Ovary (tissue), 10 donors: ENCODE measurements at regions of chrX and their contacts with region 1.

Region 1: GRCh38 chrX:140157611-140158010 is 192.3 kb upstream of the CXorf66 start:
- DNase-seq: no peak
- H3K4me3 ChIP-seq: no peak overlapping the region
- H3K27ac ChIP-seq: no peak overlapping the region
- H3K4me1 ChIP-seq: no peaks in the 10 kb centered on the region
- H3K27me3 ChIP-seq: no peaks in the 10 kb centered on the region
- CTCF ChIP-seq: no peak
- EP300 ChIP-seq: no peak
- POLR2A ChIP-seq: no peak

Region 2: DNA sequence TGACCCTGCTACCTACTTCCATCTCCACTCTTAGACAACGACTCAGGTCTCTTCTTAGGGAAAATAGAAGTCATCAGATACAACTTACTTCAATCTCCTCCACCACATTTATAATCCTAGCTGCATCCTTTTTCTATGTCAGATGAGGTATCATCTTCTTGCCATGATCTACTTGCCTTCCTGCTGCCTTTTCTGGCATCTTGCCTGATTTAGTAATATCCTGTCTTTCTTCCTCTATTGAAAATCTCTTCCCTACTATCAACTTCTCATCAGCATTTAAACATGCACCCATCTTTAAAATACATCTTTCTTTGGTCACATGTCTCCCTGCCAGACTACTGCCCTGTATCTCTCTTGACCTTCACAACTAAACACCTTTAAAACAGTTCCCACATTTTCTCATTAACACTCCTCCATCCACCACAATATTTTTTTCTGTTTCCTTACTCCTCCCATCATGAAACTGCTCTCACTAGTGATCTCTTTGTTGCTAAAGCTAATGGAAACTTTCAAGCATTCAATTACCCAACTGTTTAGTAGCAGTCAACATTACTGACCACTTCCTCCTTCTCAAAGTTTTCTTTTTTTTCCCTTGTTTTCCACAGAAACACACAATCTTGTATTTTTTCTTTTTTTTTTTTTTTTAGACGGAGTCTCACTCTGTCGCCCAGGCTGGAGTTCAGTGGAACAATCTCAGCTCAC is 91.5 kb before region 1 on chrX:
- intact Hi-C with region 1: loop called in 1 of 4 experiments (anchors 10 kb)
- DNase-seq: no peak
- H3K4me3 ChIP-seq: no peak overlapping the region
- H3K27ac ChIP-seq: no peak overlapping the region
- H3K4me1 ChIP-seq: no peaks in the 10 kb centered on the region
- H3K27me3 ChIP-seq: no peaks in the 10 kb centered on the region
- CTCF ChIP-seq: no peak
- EP300 ChIP-seq: no peak
- POLR2A ChIP-seq: no peak

Region 3: GRCh38 chrX:140389331-140389730 is 231.7 kb after region 1 on chrX:
- intact Hi-C with region 1: no loop called
- DNase-seq: no peak
- H3K4me3 ChIP-seq: no peak overlapping the region
- H3K27ac ChIP-seq: no peak overlapping the region
- H3K4me1 ChIP-seq: no peaks in the 10 kb centered on the region
- H3K27me3 ChIP-seq: no peaks in the 10 kb centered on the region
- CTCF ChIP-seq: no peak
- EP300 ChIP-seq: no peak
- POLR2A ChIP-seq: no peak

Region 4: DNA sequence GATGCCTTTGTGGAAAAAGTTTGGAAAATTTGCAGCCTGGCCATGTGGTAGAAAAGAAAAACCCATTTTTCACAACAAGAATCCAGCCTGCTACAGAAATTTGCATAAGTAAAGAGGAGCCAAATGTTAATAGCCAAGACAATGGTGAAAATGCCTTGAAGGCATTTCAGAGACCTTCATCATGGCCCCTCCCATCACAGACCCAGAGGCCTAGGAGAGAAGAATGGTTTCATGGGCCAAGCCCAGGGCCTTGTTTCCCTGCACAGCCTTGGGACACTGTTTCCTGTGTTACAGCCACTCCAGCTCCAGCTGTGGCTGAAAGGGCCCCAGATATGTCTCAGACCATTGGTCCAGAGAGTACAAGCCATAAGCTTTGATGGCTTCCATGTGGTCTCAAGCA is 450.5 kb after region 1 on chrX:
- intact Hi-C with region 1: no loop called
- DNase-seq: no peak
- H3K4me3 ChIP-seq: no peak overlapping the region
- H3K27ac ChIP-seq: no peak overlapping the region
- H3K4me1 ChIP-seq: no peaks in the 10 kb centered on the region
- H3K27me3 ChIP-seq: no peaks in the 10 kb centered on the region
- CTCF ChIP-seq: no peak
- EP300 ChIP-seq: no peak
- POLR2A ChIP-seq: no peak